ENCODE measurements at regions of chr1 and their contacts with region 1.

Region 1: GRCh38 chr1:203625628-203626019 is 1.0 kb upstream of the ATP2B4 start:
- DNase-seq: no peak
- ATAC-seq: peak; percentile 49

Region 2: DNA sequence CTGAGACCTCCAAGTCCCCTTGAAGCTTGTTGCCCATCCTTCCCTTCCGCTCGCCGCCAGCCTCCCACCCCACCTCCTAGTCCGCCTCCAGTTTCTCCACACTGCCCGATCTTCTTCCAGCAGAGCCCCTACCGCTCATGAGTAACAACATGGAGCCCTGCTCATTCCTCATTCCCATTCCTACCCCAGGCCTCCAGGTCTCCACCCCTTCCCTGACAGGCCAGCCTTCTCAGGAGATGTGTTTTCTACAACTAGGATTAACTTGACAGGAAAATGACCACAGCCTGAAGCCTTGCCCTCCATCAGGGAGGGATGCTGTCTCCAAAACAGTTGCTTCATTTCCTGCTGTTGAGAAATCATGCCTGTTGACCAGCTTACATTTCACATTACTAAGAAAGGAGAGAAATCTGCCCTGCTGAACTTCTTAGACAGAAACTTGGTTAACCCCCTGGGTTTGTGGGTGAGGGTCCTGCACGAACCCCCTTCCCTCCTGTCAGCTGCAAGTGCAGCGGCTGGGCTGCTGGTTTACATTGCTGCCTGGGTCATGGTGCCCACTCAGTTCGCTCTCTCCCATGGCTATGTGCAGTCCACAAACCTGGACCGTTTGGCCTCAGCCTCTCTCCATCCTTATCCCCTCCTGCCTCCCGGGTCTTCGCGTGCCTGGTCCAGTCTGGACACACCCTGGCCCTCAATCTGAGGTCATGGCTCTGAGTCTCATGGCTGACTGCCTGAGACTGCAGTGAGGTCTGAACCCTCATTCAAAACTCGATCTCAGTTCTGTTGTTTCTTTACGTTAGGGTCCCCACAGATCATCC is 423.0 kb before region 1 on chr1:
- intact Hi-C with region 1: no loop called
- DNase-seq: peak; percentile 63
- ATAC-seq: peak; percentile 71

Region 3: GRCh38 chr1:203519078-203519770 is 106.4 kb before region 1 on chr1:
- intact Hi-C with region 1: no loop called
- DNase-seq: no peak
- ATAC-seq: no peak

Region 4: DNA sequence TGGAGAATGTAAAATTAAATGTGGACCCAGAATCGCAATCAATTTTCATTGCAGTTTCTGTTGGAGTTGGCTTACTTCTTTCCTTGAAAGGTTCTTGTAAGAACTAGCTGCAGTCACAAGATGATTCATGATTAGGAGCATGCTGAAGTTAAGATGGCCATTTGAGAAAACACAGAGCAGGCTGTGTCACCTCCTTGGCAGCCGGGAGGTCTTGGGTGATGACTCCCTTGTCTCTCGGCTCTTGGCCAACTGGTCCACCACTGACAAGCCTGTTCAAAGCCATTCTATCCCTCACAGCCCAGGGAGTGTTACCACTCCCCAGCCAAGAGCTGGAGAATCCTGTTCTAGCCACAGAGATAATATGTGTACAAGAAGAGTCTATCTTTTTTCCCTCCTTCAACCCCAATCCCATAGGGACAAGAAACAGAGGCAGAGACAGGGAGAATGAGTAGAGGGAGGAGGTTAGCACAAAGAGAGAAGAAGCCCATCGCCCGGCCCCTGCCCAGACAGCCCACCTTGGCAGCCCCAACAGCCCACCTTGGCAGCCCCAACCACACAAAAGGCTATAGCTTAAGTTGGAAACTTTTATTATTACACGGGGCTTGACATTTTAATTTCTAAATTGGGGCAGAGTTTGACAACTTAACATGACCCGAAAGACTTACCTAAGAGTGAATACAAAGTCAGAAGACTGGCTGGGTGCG is 90.9 kb before region 1 on chr1:
- intact Hi-C with region 1: no loop called
- DNase-seq: no peak
- ATAC-seq: peak; percentile 17

Region 5: DNA sequence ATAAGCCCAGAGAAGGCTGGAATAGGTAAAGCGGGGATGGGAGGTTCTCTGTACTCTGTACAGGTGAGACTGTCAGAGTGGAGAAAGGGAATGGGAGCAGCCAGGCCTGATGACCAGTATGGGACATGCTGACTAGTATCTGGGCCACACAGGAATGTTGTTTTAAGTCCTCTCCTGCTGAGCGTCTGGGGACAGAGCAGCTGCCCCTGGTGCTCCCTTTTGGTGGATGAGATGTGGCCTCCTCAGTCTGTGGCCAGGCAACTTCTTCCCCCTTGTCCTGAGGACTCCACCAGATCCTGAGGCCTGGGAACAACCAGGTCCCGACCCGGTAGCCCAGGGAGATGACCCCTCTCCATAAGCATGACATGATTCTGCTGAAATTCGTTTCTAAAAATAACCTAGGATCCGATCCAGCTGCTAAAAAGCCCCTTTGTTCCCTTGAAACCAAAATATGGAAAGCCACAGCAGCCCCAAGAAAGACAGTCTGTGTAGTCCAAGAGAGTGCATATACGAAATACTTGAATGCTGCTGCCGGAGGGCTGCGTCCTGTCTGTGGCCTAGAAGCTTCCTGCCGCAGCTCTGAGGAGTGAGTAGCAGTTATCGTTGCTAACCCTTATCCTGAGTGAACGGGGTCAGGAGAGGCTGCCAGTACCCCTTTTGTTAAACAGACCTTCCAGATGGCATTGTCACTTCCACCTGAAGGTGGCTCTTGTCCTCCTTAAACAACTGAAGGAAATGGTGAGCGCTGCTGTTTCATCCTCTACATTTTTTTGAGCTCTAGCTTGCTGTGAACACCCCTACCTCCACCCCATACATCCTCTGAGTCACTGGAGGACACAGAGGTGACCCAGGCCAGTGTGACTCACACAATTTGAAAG is 48.2 kb after region 1 on chr1:
- intact Hi-C with region 1: loop called (anchors 5 kb)
- DNase-seq: no peak
- ATAC-seq: peak; percentile 52

Region 6: DNA sequence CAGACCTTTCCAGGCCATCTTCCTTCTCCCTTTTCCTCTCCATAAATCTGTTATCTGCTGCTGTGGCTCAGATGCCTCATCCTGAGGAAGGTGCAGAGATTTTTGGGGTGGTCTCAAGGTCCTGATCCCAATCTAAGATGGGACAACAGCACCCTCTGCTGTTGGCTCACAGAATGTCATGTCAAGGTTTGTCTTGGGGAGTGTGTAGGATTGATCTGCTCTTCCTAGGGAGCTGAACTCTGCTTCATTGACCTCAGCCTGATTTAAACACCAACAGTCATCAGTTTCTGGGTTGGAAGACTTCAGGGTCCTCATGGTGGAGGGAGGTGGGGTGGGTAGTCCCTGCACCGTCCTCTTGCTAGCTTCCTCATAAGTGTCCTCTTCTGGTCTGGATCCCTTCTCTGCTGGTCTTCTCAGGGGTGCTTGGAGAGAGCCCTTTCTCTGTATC is 76.5 kb after region 1 on chr1:
- intact Hi-C with region 1: loop called (anchors 2 kb)
- DNase-seq: no peak
- ATAC-seq: peak; percentile 74

Region 7: GRCh38 chr1:203776636-203777035 is 151.0 kb after region 1 on chr1:
- intact Hi-C with region 1: no loop called
- DNase-seq: no peak
- ATAC-seq: peak; percentile 75

Measured in Right ventricle myocardium superior (tissue), 1 donor.